Activated CD4-positive, alpha-beta T cell treated with anti-CD3 and anti-CD28 coated beads, Interleukin-2, amount 10 ng/mL, durations not matched to agents 24 days and 14 days (primary cell): ENCODE measurements at regions of chr15 and their contacts with region 1.

Region 1: DNA sequence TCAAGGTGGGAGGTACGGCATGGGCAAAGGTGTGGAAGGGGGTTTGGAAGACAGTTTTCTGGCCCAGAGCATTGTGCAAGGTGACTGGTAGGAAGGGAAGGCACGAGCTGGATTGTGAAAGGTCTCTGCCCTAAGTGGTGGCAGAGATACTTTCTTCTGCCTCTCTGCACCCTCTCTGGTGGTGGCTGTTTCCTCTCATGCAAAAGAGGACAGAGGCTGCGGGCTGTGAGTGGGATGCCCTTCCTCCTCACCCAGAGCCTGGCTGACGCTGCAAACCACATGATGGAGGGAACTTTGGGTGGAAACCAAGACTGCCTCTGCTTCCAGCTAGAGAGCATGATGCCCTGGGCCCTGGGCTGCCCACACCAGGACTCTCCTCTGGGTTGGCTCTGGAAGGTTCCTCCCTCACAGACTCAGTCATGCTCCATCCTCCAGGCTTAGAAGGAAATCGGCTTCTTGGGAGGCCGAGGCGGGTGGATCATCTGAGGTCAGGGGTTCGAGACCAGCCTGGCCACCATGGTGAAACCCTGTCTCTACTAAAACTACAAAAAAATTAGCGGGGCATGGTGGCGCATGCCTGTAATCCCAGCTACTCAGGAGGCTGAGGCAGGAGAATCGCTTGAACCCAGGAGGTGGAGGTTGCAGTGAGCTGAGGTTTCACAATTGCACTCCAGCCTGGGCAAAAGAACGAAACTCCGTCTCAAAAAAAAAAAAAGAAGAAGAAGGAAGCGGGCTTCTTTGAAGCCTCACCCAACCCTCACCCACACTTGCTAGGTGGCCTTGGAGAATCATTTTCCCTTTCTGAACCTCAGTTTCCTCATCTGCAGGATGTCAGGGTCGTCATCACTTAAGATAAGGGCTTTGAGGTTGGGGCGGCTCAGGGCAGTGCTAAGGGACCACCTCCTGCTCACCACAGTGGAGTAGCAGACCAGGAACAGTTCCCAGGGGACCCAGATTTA is 8.3 kb downstream of the PSTPIP1 start:
- DNase-seq: peak; percentile 92
- H3K4me3 Mint-ChIP-seq: peak overlapping the region; percentile 80
- H3K27ac Mint-ChIP-seq: peak overlapping the region; percentile 92
- H3K4me1 Mint-ChIP-seq: peaks cover 81% of the 10 kb centered on the region
- H3K27me3 Mint-ChIP-seq: no peaks in the 10 kb centered on the region

Region 2: DNA sequence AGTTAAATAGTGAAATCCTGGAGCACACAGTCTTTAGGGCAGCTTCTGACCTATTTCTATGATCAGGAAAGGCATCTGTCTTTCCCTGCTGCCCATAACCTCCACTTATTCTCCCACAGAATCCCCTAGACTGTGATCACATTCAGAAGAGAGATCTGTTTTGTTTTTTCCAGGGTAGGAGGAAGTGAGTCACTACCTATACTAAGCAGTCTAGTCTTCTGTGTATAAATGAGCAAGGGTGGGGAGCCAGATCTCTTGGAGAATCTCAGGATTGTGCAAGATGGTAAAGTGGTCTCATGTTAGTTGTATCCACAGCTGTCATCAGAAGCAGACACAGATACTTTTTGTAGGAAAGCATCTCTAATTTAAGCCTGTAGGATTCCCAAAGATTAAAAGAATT is 1111.3 kb before region 1 on chr15:
- intact Hi-C with region 1: no loop called
- DNase-seq: no peak
- H3K4me3 Mint-ChIP-seq: no peak overlapping the region
- H3K27ac Mint-ChIP-seq: peak overlapping the region; percentile 55
- H3K4me1 Mint-ChIP-seq: peaks cover 10% of the 10 kb centered on the region
- H3K27me3 Mint-ChIP-seq: no peaks in the 10 kb centered on the region

Region 3: GRCh38 chr15:76791511-76791910 is 211.7 kb before region 1 on chr15:
- intact Hi-C with region 1: no loop called
- DNase-seq: no peak
- H3K4me3 Mint-ChIP-seq: no peak overlapping the region
- H3K27ac Mint-ChIP-seq: no peak overlapping the region
- H3K4me1 Mint-ChIP-seq: no peaks in the 10 kb centered on the region
- H3K27me3 Mint-ChIP-seq: no peaks in the 10 kb centered on the region

Region 4: DNA sequence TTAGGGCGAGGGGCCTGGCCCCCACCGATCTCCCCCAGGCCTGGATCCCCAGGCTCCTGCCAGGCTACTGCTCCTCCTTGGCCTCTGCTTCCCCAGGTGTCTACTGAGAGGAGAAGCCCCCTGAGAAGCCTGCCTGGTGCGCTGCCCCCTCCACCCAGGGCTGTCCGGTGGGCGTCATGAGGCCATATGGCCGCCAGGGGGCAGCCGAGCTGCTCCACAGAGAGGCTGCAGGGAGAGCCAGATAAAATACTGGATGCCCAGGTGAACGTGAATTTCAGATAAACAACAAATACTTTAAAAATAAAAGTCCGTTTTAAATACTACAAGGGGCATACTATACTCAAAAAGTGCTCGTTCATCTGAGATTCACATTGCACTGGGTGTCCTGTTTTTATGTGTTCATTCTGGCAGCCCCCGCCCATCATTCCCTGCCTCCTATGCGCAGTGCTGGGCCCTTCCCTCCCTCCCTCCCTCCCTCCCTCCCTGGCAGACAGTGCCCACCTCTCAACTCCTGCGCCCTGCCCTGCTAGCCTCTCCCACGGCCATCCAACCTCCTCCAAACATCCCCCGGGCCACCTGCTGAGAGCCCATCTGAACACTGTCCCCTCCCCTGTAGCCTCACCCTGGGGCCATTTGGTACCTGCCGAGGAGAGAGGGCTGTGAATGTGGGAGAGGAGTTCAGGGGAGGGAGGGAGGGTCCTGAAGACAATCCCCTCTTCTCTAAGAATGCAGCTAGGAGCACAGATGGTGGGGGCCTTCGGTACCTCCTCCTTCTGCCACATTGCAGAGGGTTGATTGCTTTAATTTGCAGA is 21.2 kb after region 1 on chr15:
- intact Hi-C with region 1: loop called (anchors 1 kb)
- DNase-seq: peak; percentile 91
- H3K4me3 Mint-ChIP-seq: no peak overlapping the region
- H3K27ac Mint-ChIP-seq: peak overlapping the region; percentile 98
- H3K4me1 Mint-ChIP-seq: peaks cover 52% of the 10 kb centered on the region
- H3K27me3 Mint-ChIP-seq: no peaks in the 10 kb centered on the region